Activated CD4-positive, alpha-beta T cell treated with anti-CD3 and anti-CD28 coated beads, Interleukin-2, amount 10 ng/mL, durations not matched to agents 24 days and 14 days (primary cell): ENCODE measurements at regions of chr11 and their contacts with region 1.

Region 1: DNA sequence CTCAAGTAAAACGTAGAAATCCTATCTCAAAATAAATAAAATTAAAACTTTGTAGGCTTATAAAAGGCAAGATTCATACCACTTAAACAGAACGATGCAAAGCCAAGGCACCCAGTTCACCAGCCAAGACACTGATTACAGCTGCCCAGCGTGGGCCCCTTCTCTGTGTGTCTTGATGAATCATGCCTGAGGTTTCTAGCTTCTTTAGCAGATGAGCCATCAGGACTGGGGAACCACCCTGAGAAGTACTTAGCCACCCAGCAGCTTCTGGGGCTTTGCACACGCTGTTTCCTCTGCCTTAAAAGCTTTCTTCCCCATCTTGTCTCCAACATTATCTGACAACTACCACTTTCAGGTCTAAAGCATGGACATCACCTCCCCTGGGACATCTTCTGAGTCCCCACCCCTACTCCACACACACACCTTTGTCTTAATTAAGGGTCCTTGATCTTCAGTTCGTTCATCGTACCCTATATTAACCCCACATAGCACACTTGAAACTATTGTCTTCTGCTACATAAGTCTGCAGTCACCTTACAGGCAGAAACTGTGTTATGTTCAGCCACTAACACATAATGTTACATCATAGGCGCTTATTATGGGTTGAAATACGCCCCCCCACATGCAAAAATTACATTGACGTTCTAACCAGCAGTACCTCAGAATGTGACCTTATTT is 8.7 kb upstream of the LAYN start:
- DNase-seq: peak; percentile 84
- H3K4me3 Mint-ChIP-seq: peak overlapping the region; percentile 13
- H3K27ac Mint-ChIP-seq: peak overlapping the region; percentile 89
- H3K4me1 Mint-ChIP-seq: peaks cover 26% of the 10 kb centered on the region
- H3K27me3 Mint-ChIP-seq: peaks cover 21% of the 10 kb centered on the region

Region 2: GRCh38 chr11:110818032-110818687 is 713.7 kb before region 1 on chr11:
- intact Hi-C with region 1: loop called (anchors 5 kb)
- DNase-seq: no peak
- H3K4me3 Mint-ChIP-seq: no peak overlapping the region
- H3K27ac Mint-ChIP-seq: no peak overlapping the region
- H3K4me1 Mint-ChIP-seq: peaks cover 8% of the 10 kb centered on the region
- H3K27me3 Mint-ChIP-seq: no peaks in the 10 kb centered on the region

Region 3: DNA sequence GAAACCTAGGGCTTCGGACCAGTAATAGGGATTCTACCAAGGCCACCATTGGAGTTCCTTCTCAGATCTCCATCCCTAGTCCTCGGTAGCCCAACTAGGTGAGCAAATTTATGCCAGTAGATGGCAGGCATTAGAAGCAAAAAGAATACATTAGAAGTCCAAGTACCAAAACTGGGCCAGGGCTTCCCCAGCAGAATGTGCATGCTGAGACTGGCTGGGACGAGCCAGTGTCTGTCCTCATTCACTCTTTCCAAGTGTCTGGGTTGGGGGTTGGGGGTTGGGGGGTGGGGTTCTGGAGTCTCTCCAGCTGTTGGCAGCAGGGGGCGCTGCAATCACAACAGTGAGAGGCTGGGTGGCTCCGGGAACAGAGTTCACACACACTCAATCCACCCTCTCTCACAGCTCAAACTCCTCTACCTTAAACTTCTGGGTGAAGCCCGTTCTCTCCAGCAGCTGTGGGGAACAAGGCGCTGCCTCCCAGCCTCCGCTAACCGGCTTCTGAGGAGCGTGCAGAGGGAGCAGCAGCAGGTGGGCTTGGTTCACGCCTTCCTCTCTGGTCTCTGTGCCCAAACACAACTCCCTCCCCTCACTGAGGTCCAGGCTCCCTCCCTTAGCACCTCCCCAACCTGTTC is 77.1 kb before region 1 on chr11:
- intact Hi-C with region 1: loop called (anchors 2 kb)
- DNase-seq: peak; percentile 83
- H3K4me3 Mint-ChIP-seq: no peak overlapping the region
- H3K27ac Mint-ChIP-seq: peak overlapping the region; percentile 21
- H3K4me1 Mint-ChIP-seq: no peaks in the 10 kb centered on the region
- H3K27me3 Mint-ChIP-seq: peaks cover 15% of the 10 kb centered on the region

Region 4: GRCh38 chr11:111469200-111469599 is 62.6 kb before region 1 on chr11:
- intact Hi-C with region 1: loop called (anchors 5 kb)
- DNase-seq: peak; percentile 51
- H3K4me3 Mint-ChIP-seq: no peak overlapping the region
- H3K27ac Mint-ChIP-seq: no peak overlapping the region
- H3K4me1 Mint-ChIP-seq: peaks cover 6% of the 10 kb centered on the region
- H3K27me3 Mint-ChIP-seq: peaks cover 10% of the 10 kb centered on the region

Region 5: DNA sequence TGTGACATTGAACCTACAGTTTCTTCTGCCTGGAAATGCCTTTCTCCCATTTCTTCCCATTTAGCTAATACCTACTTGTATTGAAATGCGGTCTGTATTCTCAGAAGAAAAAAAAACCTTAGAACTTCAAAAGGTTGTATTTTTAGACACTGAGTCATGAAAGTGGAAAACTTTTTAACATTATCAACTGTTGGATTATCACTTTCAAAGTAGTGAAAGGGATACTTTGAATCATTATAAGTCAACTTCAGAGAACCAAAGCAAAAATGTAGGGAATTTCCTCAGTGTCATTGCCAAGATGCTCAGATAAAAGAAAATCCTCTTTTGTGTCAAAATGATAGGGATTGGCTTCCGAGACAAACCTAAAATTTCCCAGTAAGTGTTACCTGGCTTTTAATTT is 10.7 kb before region 1 on chr11:
- intact Hi-C with region 1: loop called (anchors 1 kb)
- DNase-seq: no peak
- H3K4me3 Mint-ChIP-seq: no peak overlapping the region
- H3K27ac Mint-ChIP-seq: no peak overlapping the region
- H3K4me1 Mint-ChIP-seq: peaks cover 20% of the 10 kb centered on the region
- H3K27me3 Mint-ChIP-seq: no peaks in the 10 kb centered on the region

Region 6: DNA sequence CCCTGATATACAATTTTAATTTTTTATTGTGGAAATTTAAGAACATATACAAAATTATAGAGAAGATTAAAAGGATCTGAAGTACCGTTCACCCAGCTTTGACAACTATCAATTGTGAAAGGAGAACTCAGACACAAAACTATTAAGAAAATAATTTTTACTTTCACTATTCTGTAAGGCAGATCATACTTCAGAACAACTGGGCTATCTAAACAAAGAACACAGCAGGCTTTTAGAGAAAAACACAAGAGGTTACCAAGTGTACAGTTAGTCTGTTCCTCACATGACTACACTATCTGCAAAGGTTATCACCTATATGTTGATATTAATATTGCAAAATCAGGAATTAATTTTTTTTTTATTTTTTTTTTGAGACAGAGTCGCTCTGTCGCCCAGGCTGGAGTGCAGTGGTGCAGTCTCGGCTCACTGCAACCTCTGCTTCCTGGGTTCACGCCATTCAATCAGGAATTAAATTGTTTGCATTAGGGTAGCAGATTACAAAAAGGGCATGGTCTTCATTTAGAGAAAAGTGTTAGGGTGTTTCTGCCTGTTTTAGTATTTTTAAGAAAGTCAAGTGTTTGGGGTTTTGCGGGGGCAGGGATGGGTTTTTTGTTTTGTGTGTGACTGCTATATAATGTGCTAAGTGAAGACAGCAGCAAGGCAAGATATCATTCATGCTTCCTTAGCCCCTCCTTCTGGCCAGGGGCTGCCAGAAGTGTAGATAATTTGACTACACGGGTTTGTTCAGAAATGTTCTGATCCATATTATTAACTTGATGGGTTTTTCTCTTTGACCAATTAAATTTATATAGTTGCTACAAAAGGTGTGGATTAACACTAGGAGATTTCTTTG is 42.8 kb after region 1 on chr11:
- intact Hi-C with region 1: no loop called
- DNase-seq: no peak
- H3K4me3 Mint-ChIP-seq: peak overlapping the region; percentile 14
- H3K27ac Mint-ChIP-seq: no peak overlapping the region
- H3K4me1 Mint-ChIP-seq: peaks cover 3% of the 10 kb centered on the region
- H3K27me3 Mint-ChIP-seq: peaks cover 14% of the 10 kb centered on the region

Region 7: GRCh38 chr11:111938687-111939160 is 406.9 kb after region 1 on chr11:
- intact Hi-C with region 1: loop called (anchors 5 kb)
- DNase-seq: peak; percentile 81
- H3K4me3 Mint-ChIP-seq: peak overlapping the region; percentile 91
- H3K27ac Mint-ChIP-seq: peak overlapping the region; percentile 95
- H3K4me1 Mint-ChIP-seq: peaks cover 50% of the 10 kb centered on the region
- H3K27me3 Mint-ChIP-seq: no peaks in the 10 kb centered on the region